ENCODE measurements at regions of chr16 and their contacts with region 1.

Region 1: GRCh38 chr16:75198135-75198600 is 8.8 kb downstream of the CTRB2 start:
- DNase-seq: no peak
- ATAC-seq: peak in 5 of 8 donors; percentile 14 to 35 (median 20)
- H3K4me3 ChIP-seq: peak overlapping the region in 1 of 10 donors; percentile 16
- H3K27ac ChIP-seq: no peak overlapping the region
- H3K4me1 ChIP-seq: peaks cover 0 to 12% (median 6%) of the 10 kb centered on the region in 9 donors
- H3K27me3 ChIP-seq: peaks cover 0 to 48% (median 13%) of the 10 kb centered on the region in 7 donors
- CTCF ChIP-seq: no peak

Region 2: DNA sequence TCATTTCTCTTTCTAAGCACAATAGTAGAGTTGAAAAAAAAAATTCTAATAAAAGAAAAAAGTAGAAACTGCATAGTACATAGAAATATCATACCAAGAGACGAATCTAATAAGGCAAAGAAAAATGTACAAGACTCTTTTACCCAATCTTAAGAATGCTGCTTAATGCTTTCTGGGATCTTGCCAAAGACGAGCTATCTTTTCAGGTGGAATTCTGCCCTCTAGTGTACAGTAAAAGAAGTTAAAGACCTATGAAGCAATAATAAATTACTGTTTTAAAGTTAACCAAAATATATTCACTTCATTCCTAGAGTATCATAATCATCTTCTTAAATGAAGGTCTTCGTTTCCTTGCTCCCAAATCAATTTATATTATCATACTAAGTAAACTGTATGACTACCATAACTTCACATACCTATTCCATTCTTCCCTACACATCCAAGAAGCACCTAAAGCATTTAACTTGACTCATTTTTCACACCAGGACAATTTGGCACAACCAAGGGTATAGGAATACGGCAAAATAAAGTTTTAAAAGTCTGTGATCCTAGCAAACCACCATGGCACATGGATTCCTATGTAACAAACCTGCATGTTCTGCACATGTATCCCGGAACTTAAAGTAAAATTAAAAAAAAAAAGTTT is 187.5 kb after region 1 on chr16:
- intact Hi-C with region 1: loop called in 8 of 10 experiments (anchors 1 to 10 kb)
- DNase-seq: peak in 1 of 2 donors; percentile 36
- ATAC-seq: peak in 1 of 8 donors; percentile 50
- H3K4me3 ChIP-seq: no peak overlapping the region
- H3K27ac ChIP-seq: no peak overlapping the region
- H3K4me1 ChIP-seq: peaks cover 0 to 50% (median 20%) of the 10 kb centered on the region in 9 donors
- H3K27me3 ChIP-seq: peaks cover 0 to 32% (median 0%) of the 10 kb centered on the region in 7 donors
- CTCF ChIP-seq: peak; percentile 67 to 84 (median 72)

Region 3: DNA sequence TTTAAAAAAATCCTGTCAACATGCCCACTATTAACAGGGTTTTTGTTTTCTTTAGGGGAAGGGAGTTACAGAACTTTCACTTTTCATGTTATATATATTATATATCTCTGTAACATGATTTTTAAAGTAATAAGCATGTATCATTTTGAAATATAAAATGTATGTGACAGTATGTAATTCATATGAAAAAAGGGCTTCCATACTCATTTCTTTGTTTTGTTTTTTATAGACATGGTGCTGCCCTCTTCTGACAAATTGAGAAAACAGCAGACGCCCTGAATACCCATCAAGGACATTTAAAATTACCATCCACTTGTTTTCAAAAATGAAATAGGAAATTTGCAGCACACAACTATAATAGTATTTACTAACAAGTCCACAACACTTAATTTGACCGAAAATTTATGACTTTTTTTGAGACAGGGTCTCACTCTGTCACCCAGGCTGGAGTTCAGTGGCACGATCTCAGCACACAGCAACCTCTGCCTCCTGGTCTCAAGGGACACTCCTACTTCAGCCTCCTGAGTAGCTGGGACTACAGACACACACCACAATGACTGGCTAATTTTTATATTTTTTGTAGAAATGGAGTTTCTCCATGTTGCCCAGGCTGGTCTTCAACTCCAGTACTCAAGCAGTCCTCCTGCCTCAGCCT is 204.8 kb after region 1 on chr16:
- intact Hi-C with region 1: loop called in 7 of 10 experiments (anchors 1 to 5 kb)
- DNase-seq: no peak
- ATAC-seq: peak in 5 of 8 donors; percentile 30 to 69 (median 56)
- H3K4me3 ChIP-seq: no peak overlapping the region
- H3K27ac ChIP-seq: peak overlapping the region in 8 of 10 donors; percentile 28 to 86 (median 74)
- H3K4me1 ChIP-seq: peaks cover 0 to 28% (median 25%) of the 10 kb centered on the region in 9 donors
- H3K27me3 ChIP-seq: no peaks in the 10 kb centered on the region
- CTCF ChIP-seq: peak; percentile 53 to 82 (median 74)

Region 4: GRCh38 chr16:75452464-75453190 is 254.5 kb after region 1 on chr16:
- intact Hi-C with region 1: no loop called
- DNase-seq: no peak
- ATAC-seq: peak; percentile 38 to 71 (median 51)
- H3K4me3 ChIP-seq: no peak overlapping the region
- H3K27ac ChIP-seq: peak overlapping the region in 6 of 10 donors; percentile 5 to 51 (median 16)
- H3K4me1 ChIP-seq: peaks cover 0 to 42% (median 21%) of the 10 kb centered on the region in 9 donors
- H3K27me3 ChIP-seq: no peaks in the 10 kb centered on the region
- CTCF ChIP-seq: no peak

Region 5: GRCh38 chr16:75464130-75464918 is 266.2 kb after region 1 on chr16 and contains the start of gene TMEM170A:
- intact Hi-C with region 1: loop called in 5 of 10 experiments (anchors 1 to 10 kb)
- DNase-seq: peak; percentile 100
- ATAC-seq: peak; percentile 97 to 99 (median 98)
- H3K4me3 ChIP-seq: peak within 1 kb of the TSS; percentile 51 to 100 (median 99)
- H3K27ac ChIP-seq: peak within 1 kb of the TSS; percentile 94 to 99 (median 97)
- H3K4me1 ChIP-seq: peaks cover 0 to 48% (median 19%) of the 10 kb centered on the region in 9 donors
- H3K27me3 ChIP-seq: no peaks in the 10 kb centered on the region
- CTCF ChIP-seq: peak; percentile 100
- total RNA-seq, gene TMEM170A: 7.2 to 12.5 (median 9.3) TPM

Region 6: DNA sequence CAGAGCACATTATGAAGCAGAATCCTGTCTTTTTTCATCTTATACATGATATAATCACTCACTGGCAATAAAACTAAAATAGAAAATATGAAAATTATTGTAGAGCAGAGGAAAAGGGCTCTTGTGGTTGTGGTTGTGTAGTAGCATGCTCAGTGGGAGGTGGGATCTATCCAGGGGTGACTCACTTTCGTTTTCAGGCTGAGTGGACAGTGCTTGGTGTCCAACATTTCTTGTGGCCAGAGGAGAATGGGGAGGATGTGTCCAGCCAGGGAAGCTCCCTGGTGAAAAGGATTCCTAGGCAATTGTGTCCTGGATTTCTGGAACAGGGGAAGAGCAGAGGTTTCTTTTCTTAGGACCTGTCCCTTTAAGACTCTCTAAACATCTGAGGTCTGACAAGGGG is 560.0 kb after region 1 on chr16:
- intact Hi-C with region 1: loop called in 6 of 10 experiments (anchors 10 kb)
- DNase-seq: no peak
- ATAC-seq: no peak
- H3K4me3 ChIP-seq: no peak overlapping the region
- H3K27ac ChIP-seq: no peak overlapping the region
- H3K4me1 ChIP-seq: peaks cover 0 to 4% (median 0%) of the 10 kb centered on the region in 9 donors
- H3K27me3 ChIP-seq: no peaks in the 10 kb centered on the region
- CTCF ChIP-seq: no peak

Measured in heart right ventricle (tissue), 16 donors.